Breast epithelium (tissue), 4 donors: ENCODE measurements at regions of chr20 and their contacts with region 1.

Region 1: GRCh38 chr20:23446505-23446904 is 6.2 kb downstream of the CST11 start:
- DNase-seq: no peak
- H3K4me3 ChIP-seq: no peak overlapping the region
- H3K27ac ChIP-seq: no peak overlapping the region
- H3K4me1 ChIP-seq: no peaks in the 10 kb centered on the region
- H3K27me3 ChIP-seq: no peaks in the 10 kb centered on the region
- CTCF ChIP-seq: no peak
- POLR2A ChIP-seq: no peak

Region 2: GRCh38 chr20:23404196-23404595 is 42.3 kb before region 1 on chr20:
- intact Hi-C with region 1: loop called (anchors 2 kb)
- DNase-seq: no peak
- H3K4me3 ChIP-seq: no peak overlapping the region
- H3K27ac ChIP-seq: no peak overlapping the region
- H3K4me1 ChIP-seq: no peaks in the 10 kb centered on the region
- H3K27me3 ChIP-seq: no peaks in the 10 kb centered on the region
- CTCF ChIP-seq: no peak
- POLR2A ChIP-seq: no peak

Region 3: GRCh38 chr20:23477223-23477622 is 30.7 kb after region 1 on chr20:
- intact Hi-C with region 1: no loop called
- DNase-seq: no peak
- H3K4me3 ChIP-seq: no peak overlapping the region
- H3K27ac ChIP-seq: no peak overlapping the region
- H3K4me1 ChIP-seq: no peaks in the 10 kb centered on the region
- H3K27me3 ChIP-seq: no peaks in the 10 kb centered on the region
- CTCF ChIP-seq: no peak
- POLR2A ChIP-seq: no peak